HEK293T (cell line): ENCODE measurements at regions of chr15 and their contacts with region 1.

Region 1: GRCh38 chr15:90886041-90886614 is 1.8 kb downstream of the FES start:
- DNase-seq: peak; percentile 82

Region 2: GRCh38 chr15:90648137-90649070 is 237.7 kb before region 1 on chr15:
- CTCF ChIA-PET with region 1: interaction called, 14 read pairs
- POLR2A ChIA-PET with region 1: no interaction called
- DNase-seq: peak; percentile 79

Region 3: GRCh38 chr15:90872486-90873379 is 13.4 kb before region 1 on chr15:
- CTCF ChIA-PET with region 1: interaction called, 17 read pairs
- POLR2A ChIA-PET with region 1: interaction called, 3 read pairs
- DNase-seq: peak; percentile 42